Naive thymus-derived CD8-positive, alpha-beta T cell (primary cell): ENCODE measurements at regions of chr12 and their contacts with region 1.

Region 1: DNA sequence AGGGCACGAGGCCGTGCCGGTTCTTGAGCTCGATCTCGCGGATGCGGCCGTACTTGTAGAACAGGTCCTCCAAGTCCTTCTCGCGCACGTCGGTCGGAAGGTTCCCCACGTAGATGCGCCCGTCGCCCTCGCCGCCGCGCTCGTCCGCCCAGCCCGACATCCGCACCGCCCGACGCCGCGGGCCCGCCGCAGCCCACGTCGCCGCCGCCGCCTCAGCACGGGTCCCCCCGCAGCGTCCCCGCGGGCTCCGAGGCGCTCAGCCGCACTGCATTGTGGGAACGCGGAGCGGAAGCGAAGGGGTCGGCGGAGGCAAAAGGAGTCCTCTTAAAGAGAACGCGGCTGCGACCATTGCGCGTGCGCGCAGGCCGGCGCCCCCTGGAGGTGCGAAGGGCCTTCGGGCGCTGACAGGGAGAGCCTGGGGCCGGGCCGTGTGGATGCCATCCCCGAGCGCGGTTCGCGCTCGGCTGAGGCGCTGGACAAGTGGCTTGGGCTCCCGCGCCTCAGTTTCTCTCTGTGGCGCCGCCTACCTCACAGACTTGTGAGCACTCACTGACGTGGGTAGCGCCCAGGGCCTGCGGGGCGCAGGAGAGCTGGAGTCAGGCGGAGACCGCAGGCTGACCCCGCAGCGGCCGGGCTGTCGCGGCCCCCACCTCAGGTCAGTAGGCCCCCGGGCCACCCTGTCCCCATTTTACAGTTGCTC is at the start of gene SRSF9:
- DNase-seq: peak; percentile 93 to 98 (median 97)
- ATAC-seq: peak; percentile 91 to 92
- H3K4me3 Mint-ChIP-seq: peak within 1 kb of the TSS; percentile 86 to 95 (median 92)
- H3K27ac Mint-ChIP-seq: peak within 1 kb of the TSS; percentile 85 to 95 (median 92)
- H3K4me1 Mint-ChIP-seq: peaks cover 6 to 60% (median 56%) of the 10 kb centered on the region in 4 donors
- H3K27me3 Mint-ChIP-seq: no peaks in the 10 kb centered on the region
- polyA plus RNA-seq, gene SRSF9: 181 to 198 (median 191) TPM

Region 2: GRCh38 chr12:120445911-120446843 is 23.4 kb before region 1 on chr12 and contains the starts of genes GATC and TRIAP1:
- POLR2A ChIA-PET with region 1: interaction called, 19 read pairs
- DNase-seq: peak; percentile 77 to 90 (median 86)
- ATAC-seq: peak; percentile 96 to 98
- H3K4me3 Mint-ChIP-seq: peak within 1 kb of the TSS; percentile 90 to 100 (median 98)
- H3K27ac Mint-ChIP-seq: peak within 1 kb of the TSS; percentile 94 to 99 (median 98)
- H3K4me1 Mint-ChIP-seq: peaks cover 9 to 45% (median 27%) of the 10 kb centered on the region in 4 donors
- H3K27me3 Mint-ChIP-seq: peaks cover 0 to 1% (median 0%) of the 10 kb centered on the region in 5 donors
- polyA plus RNA-seq, gene GATC: 14.6 to 19.2 (median 17.5) TPM
- polyA plus RNA-seq, gene TRIAP1: 54.1 to 65.2 (median 63.7) TPM

Region 3: DNA sequence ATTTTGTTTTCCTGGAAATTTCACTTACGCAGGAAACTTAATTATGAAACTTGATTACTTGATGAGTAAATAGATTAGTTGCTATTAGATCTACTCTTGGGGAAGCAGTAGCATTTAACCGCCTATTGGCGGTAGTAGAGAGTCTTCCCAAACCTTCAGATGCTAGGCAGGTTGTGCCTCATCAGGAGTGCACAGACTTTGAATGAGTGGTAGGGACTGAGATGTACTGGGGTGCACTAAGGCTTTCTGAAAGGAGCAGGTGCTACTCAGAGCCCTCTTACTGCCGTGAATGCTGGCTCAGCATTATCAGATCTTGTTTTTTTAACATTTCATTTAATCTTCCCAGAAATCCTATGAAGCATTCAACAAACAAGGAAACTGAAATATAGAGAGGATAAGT is 15.6 kb before region 1 on chr12:
- POLR2A ChIA-PET with region 1: interaction called, 19 read pairs
- DNase-seq: peak in 2 of 10 donors; percentile 25 to 37
- ATAC-seq: peak; percentile 87 to 94
- H3K4me3 Mint-ChIP-seq: no peak overlapping the region
- H3K27ac Mint-ChIP-seq: peak overlapping the region in 7 of 10 donors; percentile 8 to 81 (median 35)
- H3K4me1 Mint-ChIP-seq: peaks cover 0 to 18% (median 10%) of the 10 kb centered on the region in 4 donors
- H3K27me3 Mint-ChIP-seq: no peaks in the 10 kb centered on the region

Region 4: DNA sequence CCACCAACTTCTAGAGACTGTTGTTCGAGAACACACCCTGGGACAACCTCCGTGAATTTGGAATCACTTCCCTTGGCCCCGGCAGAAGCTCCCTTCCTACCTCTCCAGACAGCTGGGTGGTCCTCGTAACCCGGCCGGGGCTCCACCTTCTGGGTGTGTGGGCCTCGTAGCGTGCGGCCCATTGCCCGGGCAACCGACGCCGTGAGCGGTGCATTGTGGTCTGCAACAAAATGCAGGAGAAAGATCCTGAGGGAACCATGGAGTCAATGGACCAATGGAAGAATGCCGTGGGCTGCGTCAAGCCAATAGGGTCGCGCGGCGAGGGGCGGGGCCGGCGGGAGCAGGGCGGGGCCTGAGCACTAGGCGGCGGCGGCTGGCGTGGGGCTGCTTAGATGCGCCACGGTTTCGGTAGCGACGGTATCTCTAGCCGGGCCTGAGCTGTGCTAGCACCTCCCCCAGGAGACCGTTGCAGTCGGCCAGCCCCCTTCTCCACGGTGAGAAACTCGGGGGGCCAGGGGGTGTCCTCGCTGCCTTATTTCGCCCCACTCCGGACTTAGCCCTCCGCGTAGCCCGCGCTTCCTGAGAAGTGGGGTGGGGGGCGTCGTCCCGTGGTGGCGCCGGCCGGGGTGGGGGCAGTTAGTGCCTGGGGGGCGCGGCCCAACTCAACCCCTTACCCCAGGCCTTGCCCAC is 26.3 kb after region 1 on chr12 and contains the start of gene DYNLL1:
- POLR2A ChIA-PET with region 1: interaction called, 52 read pairs
- DNase-seq: peak; percentile 95 to 100 (median 98)
- ATAC-seq: peak; percentile 91 to 95
- H3K4me3 Mint-ChIP-seq: peak within 1 kb of the TSS; percentile 83 to 98 (median 94)
- H3K27ac Mint-ChIP-seq: peak within 1 kb of the TSS; percentile 58 to 96 (median 94)
- H3K4me1 Mint-ChIP-seq: peaks cover 13 to 37% (median 25%) of the 10 kb centered on the region in 4 donors
- H3K27me3 Mint-ChIP-seq: peaks cover 0 to 2% (median 0%) of the 10 kb centered on the region in 5 donors
- polyA plus RNA-seq, gene DYNLL1: 156 to 192 (median 179) TPM